ENCODE measurements at regions of chr10 and their contacts with region 1.

Region 1: GRCh38 chr10:67697724-67698131 is 1.7 kb upstream of the CTNNA3 start:
- DNase-seq: no peak
- H3K4me3 ChIP-seq: no peak overlapping the region
- H3K27ac ChIP-seq: no peak overlapping the region
- H3K4me1 ChIP-seq: peaks cover 0 to 4% of the 10 kb centered on the region in 2 donors
- H3K27me3 ChIP-seq: no peaks in the 10 kb centered on the region
- CTCF ChIP-seq: peak; percentile 26 to 68 (median 52)

Region 2: GRCh38 chr10:67666416-67667034 is 31.2 kb before region 1 on chr10:
- intact Hi-C with region 1: loop called (anchors 2 kb)
- DNase-seq: no peak
- H3K4me3 ChIP-seq: no peak overlapping the region
- H3K27ac ChIP-seq: peak overlapping the region in 1 of 2 donors; percentile 1
- H3K4me1 ChIP-seq: no peaks in the 10 kb centered on the region
- H3K27me3 ChIP-seq: no peaks in the 10 kb centered on the region
- CTCF ChIP-seq: peak in 2 of 3 experiments; percentile 49 to 56

Region 3: DNA sequence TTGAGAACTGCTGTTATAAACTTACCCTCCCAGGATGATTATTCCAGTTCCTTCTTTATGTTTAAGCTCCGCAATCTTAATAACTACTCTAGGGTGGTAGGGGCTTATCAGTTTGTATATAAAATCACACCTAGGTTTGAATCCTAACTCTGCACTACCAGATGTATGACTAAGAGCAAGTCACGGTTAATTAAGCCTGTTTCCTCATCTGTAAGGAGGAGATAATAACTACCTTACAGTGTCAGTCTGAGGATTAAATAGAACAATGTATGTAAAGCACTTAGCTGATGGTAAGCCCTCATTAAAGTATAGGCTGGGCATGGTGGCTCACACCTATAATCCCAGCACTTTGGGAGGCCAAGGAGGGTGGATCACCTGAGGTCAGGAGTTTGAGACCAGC is 764.8 kb after region 1 on chr10:
- intact Hi-C with region 1: no loop called
- DNase-seq: no peak
- H3K4me3 ChIP-seq: no peak overlapping the region
- H3K27ac ChIP-seq: no peak overlapping the region
- H3K4me1 ChIP-seq: no peaks in the 10 kb centered on the region
- H3K27me3 ChIP-seq: no peaks in the 10 kb centered on the region
- CTCF ChIP-seq: no peak